Mammary epithelial cell (primary cell): ENCODE measurements at regions of chr1 and their contacts with region 1.

Region 1: DNA sequence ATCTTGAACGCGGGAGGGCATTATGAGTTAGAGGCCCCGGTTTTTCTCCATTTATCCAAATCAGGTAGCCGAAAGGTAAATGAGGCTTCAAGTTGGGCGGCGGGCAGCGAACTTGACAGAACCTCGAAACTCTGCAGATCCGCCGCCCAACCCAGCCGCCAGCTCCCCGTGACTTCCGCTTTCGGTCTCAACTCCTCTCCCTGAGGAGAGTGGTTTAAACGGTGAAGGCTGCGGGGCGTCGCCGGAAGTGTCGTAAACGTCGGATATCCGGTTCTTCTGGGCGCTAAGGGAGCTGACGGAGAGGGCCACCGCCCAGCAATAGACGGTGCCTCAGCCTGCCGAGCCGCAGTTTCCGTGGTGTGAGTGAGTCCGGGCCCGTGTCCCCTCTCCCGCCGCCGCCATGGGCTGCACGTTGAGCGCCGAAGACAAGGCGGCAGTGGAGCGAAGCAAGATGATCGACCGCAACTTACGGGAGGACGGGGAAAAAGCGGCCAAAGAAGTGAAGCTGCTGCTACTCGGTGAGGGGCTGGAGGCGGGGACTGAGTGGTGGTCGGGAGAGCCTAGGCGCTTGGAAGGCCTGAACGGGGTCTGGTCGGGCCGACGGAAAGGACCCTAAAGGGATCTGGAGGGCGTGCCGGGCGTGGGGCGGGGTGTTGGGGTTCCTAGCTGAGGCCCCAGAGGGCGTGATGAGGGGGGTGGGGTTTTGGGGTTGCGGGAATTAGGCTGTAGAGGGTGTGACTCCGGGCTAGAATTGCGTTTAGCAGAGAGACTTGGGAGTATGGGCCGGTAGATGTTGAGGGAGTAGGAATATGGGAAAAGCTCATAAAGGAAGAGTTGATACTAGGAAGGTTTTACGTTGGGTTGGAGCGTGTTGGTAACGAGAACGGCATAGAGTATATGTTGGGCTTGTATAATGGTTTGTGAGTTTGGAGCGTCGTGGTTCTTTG is at the start of gene GNAI3:
- DNase-seq: peak; percentile 96
- H3K4me3 ChIP-seq: peak within 1 kb of the TSS; percentile 83 to 96 (median 89)
- H3K27ac ChIP-seq: peak within 1 kb of the TSS; percentile 98
- H3K4me1 ChIP-seq: peaks cover 9% of the 10 kb centered on the region
- H3K27me3 ChIP-seq: no peaks in the 10 kb centered on the region
- CTCF ChIP-seq: no peak
- total RNA-seq, gene GNAI3: 12.0 to 15.5 TPM

Region 2: DNA sequence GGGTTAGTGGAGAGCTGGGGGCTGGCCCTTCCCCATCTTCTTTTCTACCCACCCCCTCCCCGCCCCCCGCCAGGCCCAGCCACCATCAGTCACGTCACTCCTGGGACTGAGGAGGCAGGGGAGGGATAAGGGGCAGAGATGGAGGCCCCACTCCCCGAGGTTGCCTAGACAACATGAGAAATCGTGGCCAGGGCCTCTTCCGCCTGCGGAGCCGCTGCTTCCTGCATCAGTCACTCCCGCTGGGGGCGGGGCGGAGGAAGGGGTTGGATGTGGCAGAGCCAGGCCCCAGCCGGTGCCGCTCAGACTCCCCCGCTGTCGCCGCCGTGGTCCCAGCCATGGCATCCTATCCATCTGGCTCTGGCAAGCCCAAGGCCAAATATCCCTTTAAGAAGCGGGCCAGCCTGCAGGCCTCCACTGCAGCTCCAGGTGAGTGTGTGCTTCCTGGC is 72.3 kb after region 1 on chr1:
- CTCF ChIA-PET with region 1: no interaction called
- dilution Hi-C with region 1: loop called (anchors 5 kb)
- in situ Hi-C with region 1: loop called (anchors 5 to 10 kb)
- intact Hi-C with region 1: loop called (anchors 1 kb)
- DNase-seq: peak; percentile 80
- H3K4me3 ChIP-seq: peak overlapping the region; percentile 66 to 79 (median 69)
- H3K27ac ChIP-seq: peak overlapping the region; percentile 78
- H3K4me1 ChIP-seq: peaks cover 40% of the 10 kb centered on the region
- H3K27me3 ChIP-seq: no peaks in the 10 kb centered on the region
- CTCF ChIP-seq: no peak

Region 3: DNA sequence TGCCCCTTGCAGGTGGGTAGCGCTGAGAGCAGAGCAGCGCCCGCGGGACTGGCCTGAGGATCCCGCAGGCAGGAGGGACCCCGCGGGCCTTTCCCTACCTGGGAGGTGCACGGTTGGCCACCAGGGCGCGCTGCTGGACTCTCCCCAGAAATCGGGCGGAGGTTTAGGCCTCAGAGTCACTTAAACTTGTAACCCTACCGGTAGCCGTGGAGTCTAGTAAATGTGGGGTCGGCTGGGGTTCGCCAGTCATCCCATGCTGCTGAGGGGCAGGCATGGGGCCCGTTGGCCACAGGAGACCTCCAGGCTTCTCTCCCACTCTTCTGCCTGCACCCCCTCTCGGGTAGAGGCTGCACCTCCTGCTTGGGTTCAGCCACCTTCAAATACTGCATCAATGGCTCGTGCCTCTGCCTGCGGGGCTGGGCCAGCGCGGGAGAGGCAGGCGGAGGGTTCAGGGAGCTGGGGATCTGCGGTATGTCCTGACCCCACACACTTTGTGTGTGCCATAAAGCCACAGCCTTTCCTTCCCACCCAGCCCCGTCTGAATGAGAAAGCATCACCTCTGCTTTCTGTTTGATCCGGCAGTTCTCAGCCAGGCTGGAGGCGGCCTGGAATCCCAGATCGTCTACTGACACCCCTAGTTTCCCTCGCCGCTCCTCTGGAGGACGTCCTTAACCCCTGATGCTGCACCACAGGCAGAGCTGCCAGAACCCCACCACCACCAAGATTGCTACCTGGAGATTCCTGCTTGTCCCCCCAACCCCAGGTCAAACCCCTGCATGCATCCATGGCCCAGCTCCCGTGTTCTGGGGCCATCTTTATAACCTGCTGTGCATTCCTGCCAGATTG is 95.0 kb after region 1 on chr1:
- CTCF ChIA-PET with region 1: interaction called, 24 read pairs
- dilution Hi-C with region 1: no loop called
- in situ Hi-C with region 1: no loop called
- intact Hi-C with region 1: loop called (anchors 1 kb)
- DNase-seq: peak; percentile 51
- H3K4me3 ChIP-seq: no peak overlapping the region
- H3K27ac ChIP-seq: no peak overlapping the region
- H3K4me1 ChIP-seq: no peaks in the 10 kb centered on the region
- H3K27me3 ChIP-seq: no peaks in the 10 kb centered on the region
- CTCF ChIP-seq: peak; percentile 77 to 94

Region 4: DNA sequence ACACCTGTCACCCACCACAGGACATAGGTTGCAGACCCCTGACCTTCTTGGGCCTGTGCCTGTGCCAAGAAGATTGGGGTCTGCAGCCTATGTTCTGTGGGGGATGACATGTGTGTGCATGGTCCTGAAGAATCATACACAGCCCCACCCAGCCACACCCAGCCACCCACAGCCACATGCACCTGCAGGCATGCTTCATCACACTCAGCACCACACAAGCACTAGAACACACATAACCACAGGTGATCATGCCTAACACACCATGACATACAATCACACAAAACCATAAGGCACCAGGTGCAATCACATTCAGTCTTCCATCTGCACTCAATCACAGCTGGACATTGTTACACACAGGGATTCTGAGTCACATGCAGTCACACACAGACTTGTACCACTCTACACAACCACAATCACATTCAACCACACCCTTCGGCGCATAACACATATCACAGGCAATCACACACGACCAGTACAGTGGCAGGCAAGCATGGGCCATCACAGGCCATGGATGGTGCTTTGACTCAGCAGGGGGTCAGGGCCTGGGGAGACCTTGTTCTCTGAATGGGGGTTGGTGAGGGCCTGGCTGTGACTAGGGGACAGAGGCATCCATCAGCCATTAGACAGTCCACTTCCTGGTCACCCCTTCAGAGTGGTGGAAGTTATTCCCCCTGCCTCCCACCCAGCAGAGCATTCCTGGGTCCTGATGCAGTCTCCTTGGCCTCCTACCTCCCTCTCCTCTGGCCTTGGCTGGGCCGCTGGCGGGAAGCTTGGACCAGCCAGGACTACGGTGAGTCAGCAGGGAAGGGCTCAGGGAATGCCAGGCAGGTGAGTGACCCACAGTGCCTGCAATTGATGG is 259.5 kb after region 1 on chr1:
- CTCF ChIA-PET with region 1: interaction called, 10 read pairs
- dilution Hi-C with region 1: no loop called
- in situ Hi-C with region 1: no loop called
- intact Hi-C with region 1: no loop called
- DNase-seq: peak; percentile 57
- H3K4me3 ChIP-seq: no peak overlapping the region
- H3K27ac ChIP-seq: no peak overlapping the region
- H3K4me1 ChIP-seq: peaks cover 18% of the 10 kb centered on the region
- H3K27me3 ChIP-seq: no peaks in the 10 kb centered on the region
- CTCF ChIP-seq: no peak